ENCODE measurements at regions of chr22 and their contacts with region 1.

Region 1: DNA sequence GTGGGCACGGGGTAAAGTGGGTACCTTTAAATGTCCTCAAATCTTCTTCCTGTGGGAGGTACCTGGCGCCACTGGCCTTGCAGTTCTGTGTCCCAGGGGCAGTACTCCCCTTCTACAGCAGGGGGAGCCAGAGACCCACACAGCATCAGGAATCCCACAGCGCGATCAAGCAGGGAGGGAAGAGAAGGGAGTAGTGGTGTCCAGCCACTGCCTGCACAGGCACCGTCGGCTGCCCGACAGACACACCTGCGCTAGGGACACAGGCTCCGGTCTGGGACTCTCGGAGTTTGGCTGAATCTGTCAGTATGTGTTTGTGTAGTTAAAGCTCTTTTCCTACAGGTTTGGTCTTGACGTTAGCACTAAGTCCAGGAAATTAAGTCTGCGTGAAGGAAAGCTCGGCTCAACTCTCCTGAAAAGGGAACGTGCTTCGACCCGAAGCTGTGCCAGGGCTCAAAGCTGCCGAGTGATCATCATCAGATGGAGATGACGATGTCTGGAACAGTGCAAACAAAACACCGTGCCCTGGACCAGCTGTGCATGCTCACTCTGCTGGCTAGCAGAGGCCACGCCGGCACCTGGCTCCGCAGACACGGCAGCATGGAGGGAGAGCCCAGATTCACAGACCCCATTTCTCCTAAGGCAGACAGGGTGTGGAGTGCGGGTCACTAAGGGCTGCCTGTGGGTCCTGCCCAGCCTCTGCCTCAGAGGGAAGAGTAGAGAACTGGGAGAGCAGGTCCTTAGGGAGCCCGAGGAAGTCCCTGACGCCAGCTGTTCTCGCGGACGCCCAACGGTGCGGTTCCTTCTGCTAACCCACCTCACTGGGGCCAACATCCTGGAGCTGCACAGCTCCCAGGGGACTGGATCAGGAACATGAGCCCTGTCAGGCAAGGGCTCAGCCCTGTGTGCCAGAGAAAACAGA is 56.0 kb upstream of the BID start:
- DNase-seq: peak; percentile 53 to 93
- H3K4me3 ChIP-seq: no peak overlapping the region
- H3K27ac ChIP-seq: peak overlapping the region; percentile 37 to 63
- H3K4me1 ChIP-seq: peaks cover 10 to 15% of the 10 kb centered on the region in 2 donors
- H3K27me3 ChIP-seq: no peaks in the 10 kb centered on the region
- CTCF ChIP-seq: peak; percentile 97 to 99 (median 99)

Region 2: DNA sequence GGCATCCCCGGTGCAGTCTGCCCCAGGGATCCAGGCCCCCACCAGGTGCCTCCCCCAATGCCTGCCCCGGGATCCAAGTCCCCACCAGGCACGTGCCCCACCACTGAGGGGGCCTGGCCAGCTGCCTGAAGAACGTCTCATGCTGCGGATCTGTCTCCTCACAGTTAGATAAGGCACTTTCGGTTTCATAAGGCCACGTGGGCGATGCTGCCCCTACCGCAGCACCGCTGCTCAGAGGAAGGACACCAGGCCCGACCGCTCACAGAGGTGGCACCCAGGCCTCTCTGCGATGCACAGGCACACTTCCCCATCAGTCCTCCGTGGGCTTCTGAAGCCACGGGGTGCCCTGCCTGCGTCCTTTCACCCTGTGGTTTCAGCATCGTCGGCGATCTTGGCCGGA is 12.1 kb after region 1 on chr22:
- intact Hi-C with region 1: no loop called
- DNase-seq: no peak
- H3K4me3 ChIP-seq: no peak overlapping the region
- H3K27ac ChIP-seq: no peak overlapping the region
- H3K4me1 ChIP-seq: peaks cover 0 to 29% of the 10 kb centered on the region in 2 donors
- H3K27me3 ChIP-seq: no peaks in the 10 kb centered on the region
- CTCF ChIP-seq: no peak

Region 3: DNA sequence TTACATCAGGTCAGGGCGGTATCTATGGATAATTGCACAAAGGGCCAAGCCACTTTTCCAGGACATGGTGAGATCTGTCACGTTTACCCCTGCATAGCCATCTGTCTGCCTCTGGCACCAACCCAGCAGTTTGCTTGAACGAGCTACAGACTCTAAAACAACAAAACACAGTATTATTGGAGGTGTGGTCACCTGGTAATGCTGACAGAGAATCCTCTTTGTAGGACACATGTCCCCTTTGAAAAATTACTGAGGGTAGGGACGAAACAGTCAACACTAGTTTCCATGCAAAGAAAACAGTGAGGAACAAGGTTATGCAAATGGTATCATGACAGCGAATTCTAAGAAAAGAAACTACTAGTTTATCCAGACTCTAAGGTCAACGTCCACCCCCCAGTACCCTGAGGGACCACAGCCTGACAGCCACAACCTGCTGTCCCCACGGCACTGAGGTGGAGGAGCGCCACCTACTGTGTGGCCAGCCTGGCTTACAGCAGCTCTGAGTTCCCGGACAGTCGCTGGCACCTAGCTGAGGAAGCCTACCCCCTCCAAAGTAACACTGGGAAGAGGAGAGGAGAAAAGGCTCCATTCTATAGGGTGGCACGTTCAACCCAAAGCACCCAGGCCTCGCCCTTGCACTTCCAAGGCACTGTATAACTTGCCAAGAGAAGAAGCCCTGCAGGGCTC is 61.3 kb after region 1 on chr22:
- intact Hi-C with region 1: loop called (anchors 5 kb)
- DNase-seq: no peak
- H3K4me3 ChIP-seq: no peak overlapping the region
- H3K27ac ChIP-seq: peak overlapping the region in 1 of 2 donors; percentile 52
- H3K4me1 ChIP-seq: peaks cover 4 to 11% of the 10 kb centered on the region in 2 donors
- H3K27me3 ChIP-seq: no peaks in the 10 kb centered on the region
- CTCF ChIP-seq: peak in 2 of 3 experiments; percentile 17 to 45

Region 4: DNA sequence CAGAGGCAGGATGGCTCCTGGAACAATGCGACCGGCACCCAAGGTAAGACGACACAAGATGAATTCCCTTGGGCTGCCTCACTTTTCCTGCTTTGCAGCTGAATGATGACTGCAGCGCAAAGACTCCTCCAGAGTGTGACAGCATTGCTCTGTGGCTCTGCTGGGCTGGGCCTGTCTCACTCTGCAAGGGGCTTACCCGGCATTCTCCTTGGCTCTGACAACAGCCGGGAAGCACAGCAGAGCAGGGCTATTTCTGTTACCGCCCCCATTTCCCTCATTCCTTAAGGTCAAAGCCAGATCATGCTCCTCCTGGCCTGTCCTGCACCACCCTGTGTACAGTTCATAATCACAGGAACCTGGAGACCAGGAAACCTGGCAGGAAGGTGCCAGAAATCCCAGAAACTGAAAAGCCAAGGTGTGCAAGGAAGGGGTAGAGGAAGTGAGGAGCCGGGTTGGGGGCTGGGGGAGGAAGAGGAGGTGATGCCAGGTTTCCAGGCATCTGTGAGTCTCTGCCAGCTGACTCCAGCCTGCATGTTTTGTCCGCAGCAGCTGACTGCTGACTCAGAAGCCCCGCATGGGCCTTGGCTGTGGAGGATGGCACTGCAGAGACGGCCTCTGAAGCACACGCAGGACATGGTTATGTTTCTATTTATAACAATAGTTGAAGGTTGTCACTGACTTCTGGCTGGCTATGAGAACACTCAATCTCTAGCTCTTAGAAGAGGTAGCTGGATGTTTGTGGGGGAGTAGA is 80.4 kb after region 1 on chr22:
- intact Hi-C with region 1: loop called (anchors 2 kb)
- DNase-seq: peak; percentile 44 to 87
- H3K4me3 ChIP-seq: no peak overlapping the region
- H3K27ac ChIP-seq: peak overlapping the region; percentile 67 to 79
- H3K4me1 ChIP-seq: peaks cover 3 to 23% of the 10 kb centered on the region in 2 donors
- H3K27me3 ChIP-seq: no peaks in the 10 kb centered on the region
- CTCF ChIP-seq: peak in 2 of 3 experiments; percentile 34 to 49

Region 5: DNA sequence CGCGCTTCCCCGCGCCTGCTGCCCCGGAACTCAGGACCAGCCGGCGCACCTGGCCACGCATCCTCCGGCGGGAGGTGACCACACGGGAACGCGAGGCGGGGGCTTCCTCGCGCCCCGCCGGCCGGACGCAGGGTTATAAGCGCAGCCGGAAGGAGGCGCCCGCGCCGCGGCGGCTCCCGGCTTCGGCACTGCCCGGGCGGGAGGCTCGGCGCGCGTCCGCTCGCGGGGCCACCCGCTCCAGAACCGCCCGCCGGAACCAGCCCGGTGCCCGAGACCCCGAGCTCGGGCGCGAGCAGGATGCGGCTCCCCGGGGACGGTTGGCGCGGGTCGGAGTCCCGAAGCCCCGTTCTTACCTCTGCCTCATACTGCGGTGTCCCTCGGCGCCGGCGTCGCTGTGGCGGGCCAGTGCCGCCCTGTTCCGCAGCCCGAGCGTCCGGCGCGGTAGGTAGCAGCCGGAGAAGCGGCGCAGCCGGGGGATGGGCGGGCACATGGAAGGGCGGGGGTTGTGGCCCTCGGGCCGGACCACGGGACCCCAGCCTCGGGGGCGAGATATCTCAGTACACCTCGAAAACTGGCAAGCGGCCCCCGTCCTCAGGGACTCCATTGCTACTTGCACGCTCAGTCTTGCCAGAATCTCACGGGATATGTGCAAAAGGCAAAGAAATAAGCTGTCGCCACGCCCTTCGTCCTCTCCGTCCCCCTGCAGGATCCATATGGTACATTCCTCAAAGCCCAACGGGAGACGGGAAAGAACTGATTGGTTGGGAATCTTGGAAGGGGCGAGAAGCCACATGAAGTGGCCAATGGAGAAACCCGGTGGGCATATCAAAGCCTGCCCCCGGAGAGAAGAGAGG is 171.0 kb after region 1 on chr22:
- intact Hi-C with region 1: loop called (anchors 2 kb)
- DNase-seq: peak; percentile 65 to 94
- H3K4me3 ChIP-seq: peak overlapping the region; percentile 70 to 98
- H3K27ac ChIP-seq: peak overlapping the region; percentile 88 to 92
- H3K4me1 ChIP-seq: peaks cover 0 to 11% of the 10 kb centered on the region in 2 donors
- H3K27me3 ChIP-seq: no peaks in the 10 kb centered on the region
- CTCF ChIP-seq: peak; percentile 37 to 58 (median 50)

Region 6: DNA sequence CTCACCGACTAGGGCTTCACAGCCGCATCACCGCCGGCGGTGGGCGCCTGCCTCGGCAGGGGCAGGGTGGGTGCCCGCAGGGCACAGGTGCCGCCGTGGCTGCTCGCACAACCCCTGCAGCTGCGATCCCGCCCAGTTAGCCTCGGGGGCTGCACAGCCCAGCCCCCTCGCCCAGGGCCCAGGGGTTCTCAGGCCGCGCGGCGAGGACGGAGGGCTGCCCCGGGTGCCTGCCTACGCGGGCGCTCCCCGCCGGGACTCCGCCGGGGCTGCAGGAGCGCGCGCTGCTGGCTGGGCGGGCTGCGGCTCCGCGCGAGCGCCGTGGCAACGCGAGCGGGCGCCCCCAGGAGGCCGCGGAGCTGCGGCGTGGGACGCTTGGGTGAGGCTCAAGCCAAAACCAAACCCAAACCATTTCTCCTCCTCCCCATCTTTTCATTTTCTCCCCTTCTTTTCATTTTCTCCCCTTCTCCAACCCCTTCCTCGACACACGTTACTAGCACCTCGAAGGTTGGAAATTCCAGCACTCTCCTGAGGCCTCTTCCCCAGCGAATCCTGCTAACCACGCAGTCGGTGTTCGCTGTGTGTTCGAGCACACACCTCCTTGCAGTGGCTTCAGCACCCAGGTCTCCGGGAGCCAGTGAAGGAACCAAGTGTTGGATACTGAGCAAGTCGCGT is 194.1 kb after region 1 on chr22 and contains the start of gene MICAL3:
- intact Hi-C with region 1: loop called (anchors 1 kb)
- DNase-seq: peak in 1 of 2 donors; percentile 75
- H3K4me3 ChIP-seq: peak within 1 kb of the TSS; percentile 71 to 88
- H3K27ac ChIP-seq: peak within 1 kb of the TSS; percentile 69
- H3K4me1 ChIP-seq: peaks cover 0 to 3% of the 10 kb centered on the region in 2 donors
- H3K27me3 ChIP-seq: no peaks in the 10 kb centered on the region
- CTCF ChIP-seq: peak; percentile 26 to 62 (median 51)
- total RNA-seq, gene MICAL3: 36.9 TPM

Region 7: DNA sequence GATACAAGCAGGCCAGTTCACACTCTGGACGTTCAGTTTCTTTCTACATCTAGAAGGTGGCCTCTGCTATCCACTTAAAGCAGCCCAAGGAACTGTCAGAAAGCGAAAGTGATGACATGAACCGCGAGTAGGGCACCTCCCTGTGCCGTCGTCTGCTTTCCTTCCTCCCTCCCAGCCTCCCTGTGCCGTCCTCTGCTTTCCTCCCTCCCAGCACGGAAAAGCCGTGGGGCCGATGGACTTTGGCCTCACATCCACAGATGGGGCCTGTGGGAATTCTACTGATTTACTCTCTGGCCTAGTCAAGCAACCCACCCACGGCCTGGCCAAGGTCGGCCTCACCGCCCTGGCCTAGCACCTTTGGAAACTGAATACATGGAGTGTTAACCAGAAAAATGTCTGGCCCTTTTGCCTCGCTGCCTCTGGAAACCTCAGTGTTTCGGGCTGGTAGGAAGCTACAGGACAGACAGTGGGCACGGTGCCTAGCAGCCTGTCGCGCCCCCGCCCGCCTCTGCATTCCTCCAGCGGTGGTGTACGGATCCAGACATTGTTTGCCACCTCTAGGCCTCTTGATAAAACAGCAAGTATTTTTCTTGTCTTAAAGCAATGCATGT is 261.7 kb after region 1 on chr22:
- intact Hi-C with region 1: loop called (anchors 1 kb)
- DNase-seq: peak in 1 of 2 donors; percentile 82
- H3K4me3 ChIP-seq: peak overlapping the region; percentile 46 to 64
- H3K27ac ChIP-seq: peak overlapping the region; percentile 94 to 97
- H3K4me1 ChIP-seq: no peaks in the 10 kb centered on the region
- H3K27me3 ChIP-seq: no peaks in the 10 kb centered on the region
- CTCF ChIP-seq: no peak